Sciatic nerve (tissue), 2 donors: ENCODE measurements at regions of chr10 and their contacts with region 1.

Region 1: DNA sequence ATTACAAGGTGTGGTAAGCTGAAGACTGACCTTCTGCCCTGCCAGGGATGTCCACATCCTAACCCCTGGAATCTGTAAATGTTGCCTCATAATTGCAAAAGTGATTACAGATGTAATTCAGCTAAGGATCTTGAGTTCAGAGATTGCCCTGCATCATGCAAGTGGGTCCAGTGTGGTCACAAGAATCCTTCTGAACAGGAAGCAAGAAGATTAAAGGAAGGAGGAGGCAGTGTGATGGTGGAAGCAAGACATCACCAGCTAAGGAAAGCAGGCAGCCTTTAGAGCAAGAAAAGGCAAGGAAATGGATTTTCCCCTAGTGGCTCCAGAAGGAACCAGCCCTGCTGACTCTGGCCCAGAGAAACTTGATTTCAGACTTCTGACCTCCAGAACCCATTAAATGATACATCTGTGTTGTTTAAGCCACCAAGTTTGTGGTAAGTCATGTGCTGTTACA is 78.1 kb downstream of the USP6NL start:
- DNase-seq: no peak
- ATAC-seq: peak; percentile 76

Region 2: DNA sequence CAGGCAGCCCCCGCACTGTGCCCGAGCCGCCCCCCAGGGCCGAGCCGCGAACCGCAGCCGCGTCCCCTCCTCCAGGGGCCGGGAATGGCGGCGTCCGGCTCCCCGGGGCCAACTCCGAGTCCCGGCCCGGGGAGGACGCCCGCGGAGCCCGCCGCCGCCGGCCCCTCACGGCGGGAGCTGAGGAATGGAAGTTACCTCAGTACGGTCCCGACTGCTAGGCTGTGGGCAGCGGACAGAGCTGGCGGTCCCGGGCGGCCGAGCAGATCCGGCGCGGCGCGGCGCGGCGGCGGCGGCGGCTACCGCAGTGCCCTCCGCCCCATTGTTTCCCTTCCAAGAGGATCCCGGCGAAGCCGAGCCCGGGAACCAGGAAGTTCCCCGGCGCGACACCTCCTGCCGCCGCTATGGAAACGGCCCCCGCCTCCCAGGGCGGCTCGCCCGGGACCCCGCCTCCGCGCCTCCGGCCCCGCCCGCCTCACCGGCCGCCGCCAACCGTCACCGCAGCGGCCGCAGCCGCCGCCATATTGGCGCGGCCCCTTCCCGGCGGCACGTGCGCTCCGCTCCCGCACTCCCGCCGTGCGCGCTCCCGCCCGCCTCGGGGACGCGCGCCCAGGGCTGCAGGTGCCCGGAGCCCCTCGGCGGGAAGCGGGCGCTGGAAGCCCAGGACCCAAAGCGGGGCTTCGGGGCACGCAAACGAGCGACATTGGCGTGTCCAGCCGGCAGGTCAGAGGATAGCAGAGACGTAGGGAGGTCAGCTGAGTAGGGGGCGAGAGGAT is 78.1 kb after region 1 on chr10 and contains the start of gene USP6NL:
- intact Hi-C with region 1: loop called (anchors 10 kb)
- DNase-seq: peak; percentile 95
- ATAC-seq: peak; percentile 96
- total RNA-seq, gene USP6NL: 37.8 TPM